ENCODE measurements at regions of chr5 and their contacts with region 1.

Region 1: GRCh38 chr5:113606298-113607134 is 93.0 kb downstream of the YTHDC2 start:
- DNase-seq: peak; percentile 65

Region 2: GRCh38 chr5:112995764-112996618 is 610.5 kb before region 1 on chr5:
- CTCF ChIA-PET with region 1: interaction called, 12 read pairs
- POLR2A ChIA-PET with region 1: no interaction called
- DNase-seq: peak; percentile 70

Region 3: GRCh38 chr5:113505181-113505580 is 101.3 kb before region 1 on chr5:
- CTCF ChIA-PET with region 1: no interaction called
- POLR2A ChIA-PET with region 1: no interaction called
- DNase-seq: no peak

Measured in HEK293T (cell line).